HEK293 (cell line): ENCODE measurements at regions of chr15 and their contacts with region 1.

Region 1: DNA sequence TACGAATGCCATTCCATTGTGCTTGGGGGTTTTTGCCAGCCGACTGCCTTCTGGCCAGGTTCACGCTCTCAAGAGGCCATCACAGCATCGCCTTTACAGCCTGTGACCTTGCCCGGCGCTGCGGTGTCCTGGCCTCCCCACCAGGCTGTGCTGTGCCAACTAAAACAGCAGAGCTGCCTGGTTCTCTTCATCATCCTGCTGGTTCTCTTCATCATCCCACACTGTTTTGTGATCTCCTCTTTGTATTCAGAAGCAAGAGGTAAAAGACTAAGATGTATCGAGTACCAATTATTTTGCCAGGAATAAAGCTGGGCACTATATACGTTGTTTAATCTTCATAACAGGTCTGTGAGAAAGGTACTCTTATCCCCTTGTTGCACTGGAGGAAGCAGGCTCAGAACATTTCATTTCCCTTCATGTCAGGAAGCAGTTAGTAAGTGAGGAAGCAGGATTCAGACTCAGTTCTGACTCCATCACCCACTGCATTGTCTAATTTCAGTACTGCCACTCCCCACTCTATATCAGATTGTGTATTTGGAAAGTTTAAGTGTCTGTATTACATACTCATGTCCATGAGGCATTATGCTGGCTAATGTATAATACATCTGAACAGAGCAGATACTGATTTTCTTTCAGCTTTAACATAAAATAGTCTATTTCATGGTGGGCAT is 92.7 kb downstream of the LRRC28 start:
- H3K4me3 ChIP-seq: no peak overlapping the region
- H3K27ac ChIP-seq: no peak overlapping the region
- H3K4me1 ChIP-seq: no peaks in the 10 kb centered on the region
- CTCF ChIP-seq: no peak

Region 2: DNA sequence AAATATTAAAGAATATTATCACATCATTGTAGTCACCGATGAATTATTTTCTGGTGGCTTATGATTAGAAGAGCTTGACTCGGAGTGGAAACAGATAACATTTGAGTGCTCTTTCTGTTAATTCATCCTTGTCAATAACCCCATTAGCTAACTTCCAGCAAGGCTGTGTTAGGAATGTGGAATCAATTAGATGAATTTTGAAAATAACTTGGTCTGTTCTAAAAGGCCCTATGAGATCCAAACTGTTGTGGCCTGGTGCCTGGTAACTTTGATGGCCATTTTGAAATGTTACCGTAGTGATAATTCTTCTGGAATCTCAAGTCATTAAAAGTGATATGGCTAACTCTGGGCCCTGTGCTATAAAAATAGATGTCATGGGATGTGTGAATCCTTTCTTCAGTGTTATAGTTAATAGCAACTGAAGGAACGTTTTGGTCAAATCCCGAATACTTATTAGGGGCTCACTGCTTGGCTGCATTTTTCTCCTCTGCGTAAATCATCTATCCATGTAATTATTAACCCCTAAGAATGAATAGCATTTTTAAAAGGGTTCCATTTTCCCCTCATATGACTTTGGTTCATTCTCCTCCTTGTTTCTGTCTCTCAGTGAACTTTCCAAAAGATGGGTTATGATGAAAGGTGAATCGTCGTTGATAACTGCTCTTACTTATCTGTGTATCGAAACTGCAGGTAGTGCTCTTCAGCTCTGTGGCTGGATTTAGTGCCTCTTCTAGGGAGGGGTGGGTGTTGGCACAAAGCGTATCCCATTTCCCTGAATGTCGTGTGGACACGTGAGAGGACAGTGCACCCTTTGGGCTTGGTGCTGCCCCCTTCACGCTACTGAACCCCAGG is 612.9 kb before region 1 on chr15:
- CTCF ChIA-PET with region 1: interaction called, 10 read pairs
- POLR2A ChIA-PET with region 1: no interaction called
- H3K4me3 ChIP-seq: no peak overlapping the region
- H3K27ac ChIP-seq: no peak overlapping the region
- H3K4me1 ChIP-seq: peaks cover 31% of the 10 kb centered on the region
- CTCF ChIP-seq: no peak

Region 3: DNA sequence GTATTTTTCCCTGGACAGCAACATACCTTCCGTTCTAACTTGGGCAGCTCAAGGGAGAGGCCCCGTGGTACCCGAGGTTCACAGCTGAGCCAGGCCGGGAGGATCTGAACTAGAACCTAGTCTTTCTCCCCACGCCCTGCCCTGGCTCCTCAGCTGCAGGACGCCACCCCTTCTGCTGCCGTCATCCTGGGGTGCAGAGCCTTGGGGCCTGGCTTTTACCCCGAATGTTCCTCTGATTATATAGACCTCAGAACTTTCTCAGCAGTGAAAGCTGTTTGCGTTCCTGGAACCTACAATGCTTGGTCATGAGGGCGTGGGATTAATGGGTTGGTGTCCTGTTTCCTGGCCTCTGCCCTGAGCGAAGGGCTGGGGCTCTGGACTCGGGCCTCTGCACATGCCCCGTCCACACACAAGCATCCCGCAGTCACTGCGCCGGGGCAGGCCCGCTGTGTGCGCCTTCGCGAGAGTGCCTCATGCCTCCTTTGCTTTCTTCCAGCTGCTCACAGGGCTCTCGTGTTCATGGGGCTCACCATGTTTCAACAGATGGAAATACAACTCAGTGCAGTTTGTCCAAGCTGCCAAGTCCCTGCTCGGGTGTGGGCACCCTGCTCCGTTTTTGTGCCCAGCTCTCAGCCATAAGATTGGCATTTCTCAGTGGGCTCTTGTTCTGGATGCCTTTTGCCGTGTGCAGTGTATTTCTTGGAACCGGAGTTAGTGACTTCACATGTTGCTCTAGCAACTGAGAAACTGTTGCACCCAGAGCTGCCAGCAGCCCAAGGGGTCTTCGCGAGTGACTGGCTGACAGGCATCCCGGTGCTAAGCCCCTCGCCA is 218.7 kb before region 1 on chr15:
- CTCF ChIA-PET with region 1: no interaction called
- POLR2A ChIA-PET with region 1: no interaction called
- H3K4me3 ChIP-seq: no peak overlapping the region
- H3K27ac ChIP-seq: no peak overlapping the region
- H3K4me1 ChIP-seq: peaks cover 7% of the 10 kb centered on the region
- CTCF ChIP-seq: no peak